Dorsolateral prefrontal cortex (tissue), 120 donors: ENCODE measurements at regions of chr10 and their contacts with region 1.

Region 1: GRCh38 chr10:35336084-35336831 is at the start of gene CCNY:
- DNase-seq: peak; percentile 54 to 86 (median 68)
- H3K4me3 ChIP-seq: peak within 1 kb of the TSS; percentile 71 to 99 (median 94)
- H3K27ac ChIP-seq: peak within 1 kb of the TSS in 58 of 59 donors; percentile 41 to 94 (median 84)
- H3K27me3 ChIP-seq: no peaks in the 10 kb centered on the region
- CTCF ChIP-seq: peak in 10 of 56 donors; percentile 8 to 29 (median 21)
- total RNA-seq, gene CCNY: 62.3 to 136 (median 97.7) TPM

Region 2: DNA sequence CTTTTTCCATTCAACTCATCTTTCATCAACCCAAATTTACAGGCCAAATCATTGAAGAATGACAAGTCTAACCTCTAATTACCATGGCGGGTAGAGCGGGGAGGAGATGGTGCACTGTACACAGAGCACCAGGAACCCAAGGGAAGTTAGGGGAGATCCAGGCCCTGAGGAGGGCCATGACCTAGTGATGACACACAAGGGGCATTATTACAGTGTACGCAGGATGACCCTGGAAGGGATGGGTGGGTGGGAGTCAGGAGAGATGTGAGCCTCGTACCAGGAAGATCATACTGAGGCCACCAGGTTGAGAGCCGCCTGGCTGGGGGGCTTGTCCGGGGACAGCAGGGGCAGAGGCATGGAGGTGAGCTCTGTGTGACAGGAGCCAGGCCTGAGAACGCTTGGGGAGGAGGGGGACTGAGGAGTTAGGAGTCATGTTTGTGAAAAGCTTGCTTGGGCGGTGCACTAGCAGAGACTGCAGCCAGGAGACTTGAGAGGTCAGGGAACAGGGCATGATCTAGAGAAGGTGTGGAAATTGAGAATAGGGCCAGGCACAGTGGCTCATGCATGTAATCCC is 89.4 kb before region 1 on chr10:
- intact Hi-C with region 1: loop called in 1 of 2 experiments (anchors 5 kb)
- DNase-seq: no peak
- H3K4me3 ChIP-seq: no peak overlapping the region
- H3K27ac ChIP-seq: no peak overlapping the region
- H3K27me3 ChIP-seq: no peaks in the 10 kb centered on the region
- CTCF ChIP-seq: no peak

Region 3: DNA sequence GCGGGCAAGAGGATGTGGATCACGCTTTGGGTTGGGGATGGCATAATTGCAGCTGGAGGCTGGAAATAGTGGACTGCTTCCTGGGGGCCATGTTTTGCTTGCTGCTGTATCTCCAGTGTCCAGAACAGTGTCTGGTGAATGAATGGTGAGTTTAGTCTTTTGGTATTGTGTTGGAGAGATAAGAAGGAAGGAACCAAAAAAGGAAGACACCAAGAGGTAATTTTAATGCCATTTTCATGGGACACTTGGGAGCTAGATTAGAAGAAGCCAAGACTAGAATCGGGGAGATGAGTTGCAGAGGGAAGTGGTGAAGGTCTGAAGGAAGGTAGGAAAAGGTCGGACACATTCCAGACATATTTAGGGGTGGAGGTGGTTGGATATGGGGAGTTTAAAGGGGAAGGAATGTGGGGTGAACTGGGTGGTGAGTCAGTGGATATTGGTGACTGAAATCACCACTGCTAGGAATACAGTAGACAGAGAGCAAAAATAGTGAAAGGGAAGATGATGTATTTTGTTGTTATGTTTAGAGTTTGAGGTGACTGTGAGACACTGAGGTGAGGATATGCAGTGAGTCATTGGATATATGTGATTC is 76.7 kb after region 1 on chr10:
- intact Hi-C with region 1: loop called (anchors 10 kb)
- DNase-seq: no peak
- H3K4me3 ChIP-seq: no peak overlapping the region
- H3K27ac ChIP-seq: peak overlapping the region in 27 of 59 donors; percentile 0 to 80 (median 36)
- H3K27me3 ChIP-seq: no peaks in the 10 kb centered on the region
- CTCF ChIP-seq: no peak

Region 4: GRCh38 chr10:35462491-35462934 is 126.3 kb after region 1 on chr10:
- intact Hi-C with region 1: loop called (anchors 5 kb)
- DNase-seq: peak in 3 of 10 donors; percentile 56 to 65 (median 62)
- H3K4me3 ChIP-seq: peak overlapping the region in 6 of 59 donors; percentile 4 to 28 (median 14)
- H3K27ac ChIP-seq: peak overlapping the region; percentile 27 to 100 (median 92)
- H3K27me3 ChIP-seq: no peaks in the 10 kb centered on the region
- CTCF ChIP-seq: peak in 4 of 56 donors; percentile 11 to 31 (median 22)